ENCODE measurements at regions of chr20 and their contacts with region 1.

Region 1: GRCh38 chr20:16801919-16802911 is 54.1 kb downstream of the OTOR start:
- DNase-seq: peak; percentile 42 to 83
- H3K4me3 ChIP-seq: no peak overlapping the region
- H3K4me1 ChIP-seq: no peaks in the 10 kb centered on the region
- H3K27me3 ChIP-seq: peaks cover 22% of the 10 kb centered on the region

Region 2: GRCh38 chr20:17281478-17281877 is 479.3 kb after region 1 on chr20:
- in situ Hi-C with region 1: loop called (anchors 25 kb)
- DNase-seq: peak in 1 of 2 experiments; percentile 64
- H3K4me3 ChIP-seq: no peak overlapping the region
- H3K4me1 ChIP-seq: no peaks in the 10 kb centered on the region
- H3K27me3 ChIP-seq: no peaks in the 10 kb centered on the region; the same call in 1 of the 2 replicates

Region 3: DNA sequence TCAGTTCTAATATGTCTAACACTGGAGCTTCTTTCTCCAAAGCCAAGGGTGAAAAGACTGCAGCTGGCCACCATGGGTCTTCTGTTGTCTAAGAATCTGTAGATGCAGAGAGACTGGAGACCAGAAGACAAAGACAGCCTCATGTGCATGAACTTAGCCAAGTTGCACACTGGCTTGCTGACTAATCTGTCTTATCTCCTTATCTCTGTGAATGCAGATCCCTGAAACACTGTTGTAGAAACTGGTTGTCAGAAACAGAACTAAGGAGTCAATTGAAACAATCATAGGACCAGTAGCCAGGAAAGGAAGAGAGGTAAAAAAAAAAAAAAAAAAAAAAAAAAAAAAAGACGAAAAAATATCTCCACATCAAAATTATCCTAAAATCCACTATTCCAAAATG is 619.3 kb after region 1 on chr20:
- in situ Hi-C with region 1: loop called (anchors 10 kb)
- DNase-seq: no peak
- H3K4me3 ChIP-seq: no peak overlapping the region
- H3K4me1 ChIP-seq: no peaks in the 10 kb centered on the region
- H3K27me3 ChIP-seq: peaks cover 6% of the 10 kb centered on the region; the same call in 1 of the 2 replicates